ENCODE measurements at regions of chr12 and their contacts with region 1.

Region 1: GRCh38 chr12:34233618-34234017 is 211.3 kb downstream of the ALG10 start:
- DNase-seq: no peak
- H3K4me3 ChIP-seq: no peak overlapping the region
- H3K27ac ChIP-seq: no peak overlapping the region
- H3K4me1 ChIP-seq: peaks cover 4% of the 10 kb centered on the region; the same call in 1 of the 2 replicates
- H3K27me3 ChIP-seq: no peaks in the 10 kb centered on the region
- CTCF ChIP-seq: no peak

Region 2: DNA sequence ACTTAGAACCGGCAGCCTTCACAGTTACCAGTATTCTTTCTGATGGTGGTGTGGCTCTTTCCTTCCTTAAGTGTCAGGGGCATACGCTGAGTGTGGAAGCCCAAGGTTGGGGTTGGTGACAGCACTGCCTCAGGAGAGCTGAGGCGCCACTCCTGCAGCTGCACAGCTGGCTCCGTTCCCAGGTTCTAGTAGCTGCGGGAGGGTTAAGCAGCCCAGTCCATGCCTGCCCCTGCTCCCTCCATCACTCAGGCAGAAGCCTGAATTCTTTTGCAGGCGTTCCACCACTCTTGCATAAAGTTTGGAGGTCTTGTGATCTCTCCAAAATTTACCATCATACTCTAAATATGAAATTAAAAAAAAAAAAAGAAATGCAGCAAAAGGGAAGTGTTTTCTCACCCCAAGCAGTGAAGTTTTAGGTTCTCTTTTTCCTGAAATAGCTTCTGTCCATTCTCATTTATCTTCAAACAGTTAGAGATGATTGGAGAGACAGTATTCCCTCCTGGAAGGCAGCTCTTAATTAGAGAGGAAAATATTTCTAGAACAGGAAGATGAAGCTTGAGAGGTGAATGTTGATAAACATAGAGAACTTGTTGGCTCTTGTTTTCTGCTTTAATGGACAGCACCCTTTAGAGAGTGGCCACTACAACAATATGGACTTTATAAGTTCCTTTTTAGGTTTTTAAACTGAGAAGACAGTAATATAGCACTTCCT is 1698.2 kb before region 1 on chr12:
- CTCF ChIA-PET with region 1: no interaction called
- POLR2A ChIA-PET with region 1: interaction called, 13 read pairs
- intact Hi-C with region 1: no loop called
- DNase-seq: peak in 1 of 2 experiments; percentile 29
- H3K4me3 ChIP-seq: no peak overlapping the region
- H3K27ac ChIP-seq: no peak overlapping the region
- H3K4me1 ChIP-seq: peaks cover 11% of the 10 kb centered on the region; the same call in 1 of the 2 replicates
- H3K27me3 ChIP-seq: no peaks in the 10 kb centered on the region
- CTCF ChIP-seq: no peak

Region 3: GRCh38 chr12:34204830-34205285 is 28.8 kb before region 1 on chr12:
- CTCF ChIA-PET with region 1: no interaction called
- POLR2A ChIA-PET with region 1: interaction called, 11 read pairs
- intact Hi-C with region 1: no loop called
- DNase-seq: no peak
- H3K4me3 ChIP-seq: no peak overlapping the region
- H3K27ac ChIP-seq: no peak overlapping the region
- H3K4me1 ChIP-seq: no peaks in the 10 kb centered on the region
- H3K27me3 ChIP-seq: peaks cover 28% of the 10 kb centered on the region
- CTCF ChIP-seq: no peak

Region 4: GRCh38 chr12:34218165-34219045 is 15.2 kb before region 1 on chr12:
- CTCF ChIA-PET with region 1: interaction called, 6 read pairs
- POLR2A ChIA-PET with region 1: interaction called, 17 read pairs
- intact Hi-C with region 1: no loop called
- DNase-seq: peak; percentile 64 to 73
- H3K4me3 ChIP-seq: peak overlapping the region; percentile 63; the same call in 1 of the 2 replicates
- H3K27ac ChIP-seq: no peak overlapping the region
- H3K4me1 ChIP-seq: no peaks in the 10 kb centered on the region
- H3K27me3 ChIP-seq: no peaks in the 10 kb centered on the region
- CTCF ChIP-seq: peak; percentile 91